ENCODE measurements at regions of chr12 and their contacts with region 1.

Region 1: DNA sequence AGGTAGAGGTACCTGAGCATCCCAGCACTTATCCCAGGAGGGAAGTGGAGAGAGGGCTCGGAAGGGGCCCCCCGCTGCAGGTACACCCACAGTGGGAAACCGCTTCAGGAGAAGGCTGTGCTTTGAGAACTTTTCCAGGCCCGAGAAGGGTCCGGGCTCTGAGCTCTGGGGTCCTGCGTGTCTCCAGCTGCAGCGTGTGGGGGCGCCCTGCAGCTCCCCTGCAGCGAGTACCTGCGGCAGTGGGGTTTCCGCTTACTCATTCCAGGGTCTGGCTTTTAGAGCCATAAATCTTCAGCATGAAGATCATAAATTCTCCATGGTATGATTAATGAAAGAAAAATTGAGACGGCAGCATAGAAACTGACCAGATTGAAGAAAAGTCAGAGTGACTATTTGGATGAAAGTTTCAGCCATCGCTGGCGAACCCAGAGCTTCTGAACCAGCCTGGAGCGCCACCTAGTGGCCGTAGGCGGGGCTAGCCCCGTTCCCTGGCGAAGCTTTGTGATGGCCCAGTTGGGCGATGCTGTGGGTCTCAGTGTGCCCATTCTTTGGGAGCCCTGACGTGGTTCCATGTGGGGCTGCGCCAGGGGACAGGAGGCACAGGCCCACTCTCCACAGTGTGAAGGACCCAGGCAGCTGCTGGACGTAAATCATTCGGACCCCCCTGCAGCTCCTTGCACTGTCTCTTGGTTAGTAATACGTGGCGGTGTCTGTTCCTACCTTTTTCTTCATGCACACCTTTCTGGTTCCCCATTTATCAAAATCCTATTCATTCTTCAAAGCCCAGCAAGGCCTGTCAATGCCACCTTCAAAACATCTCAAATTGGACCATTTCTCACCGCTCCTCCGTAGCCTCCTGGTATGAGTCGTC is 198.2 kb downstream of the TSPAN9 start:
- DNase-seq: no peak
- H3K4me3 ChIP-seq: no peak overlapping the region
- H3K27ac ChIP-seq: no peak overlapping the region
- H3K4me1 ChIP-seq: peaks cover 18% of the 10 kb centered on the region
- H3K27me3 ChIP-seq: no peaks in the 10 kb centered on the region
- CTCF ChIP-seq: peak; percentile 83 to 90 (median 87)
- POLR2A ChIP-seq: no peak

Region 2: DNA sequence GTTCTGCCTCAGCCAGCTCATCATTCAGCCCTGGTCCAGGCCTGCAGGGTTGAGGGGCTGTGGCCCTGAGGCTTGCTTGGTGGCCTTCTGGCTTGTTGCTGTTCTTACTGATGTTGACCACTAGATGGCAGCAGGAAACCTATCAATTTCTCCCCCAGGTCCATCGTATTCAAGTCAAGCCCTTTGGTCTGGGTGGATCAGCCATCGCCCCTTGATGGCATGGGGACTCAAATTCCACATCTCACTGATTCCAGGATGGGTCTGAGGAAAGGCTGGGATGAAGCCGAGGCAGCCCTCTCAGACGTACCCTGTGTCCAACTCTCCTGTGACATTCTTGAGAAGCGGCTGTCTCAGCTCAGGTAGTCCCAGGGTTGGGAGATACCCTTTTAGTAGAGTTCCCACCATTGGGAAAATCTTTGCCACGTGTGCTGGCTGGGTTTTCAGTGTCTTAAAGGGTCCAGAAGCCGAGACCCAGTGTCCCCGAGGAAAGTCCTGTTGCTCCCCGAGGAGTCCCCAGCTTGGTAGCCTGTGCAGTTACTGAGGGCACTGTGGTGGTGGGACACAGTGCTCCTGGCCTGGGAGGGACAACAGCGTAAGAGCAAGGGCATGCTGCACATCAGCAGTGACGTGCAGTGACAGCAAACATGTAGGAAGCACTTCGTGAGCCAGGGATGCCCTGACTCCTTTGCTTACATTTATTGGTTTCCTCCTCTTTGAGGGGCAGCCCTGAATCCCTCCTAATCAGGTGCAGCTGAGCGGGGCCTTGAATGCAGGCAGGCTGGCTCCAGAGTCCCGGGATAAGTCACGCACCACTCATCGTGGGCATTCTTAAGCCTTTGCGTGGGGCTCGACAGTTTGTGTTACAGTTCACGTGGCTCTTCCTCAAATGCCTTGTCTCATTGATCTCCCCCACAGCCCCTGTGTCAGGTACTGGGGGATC is 139.6 kb before region 1 on chr12:
- intact Hi-C with region 1: loop called (anchors 2 kb)
- DNase-seq: no peak
- H3K4me3 ChIP-seq: no peak overlapping the region
- H3K27ac ChIP-seq: no peak overlapping the region
- H3K4me1 ChIP-seq: peaks cover 50% of the 10 kb centered on the region
- H3K27me3 ChIP-seq: no peaks in the 10 kb centered on the region
- CTCF ChIP-seq: peak; percentile 51 to 86 (median 75)
- POLR2A ChIP-seq: no peak

Region 3: GRCh38 chr12:3202734-3203446 is 72.5 kb before region 1 on chr12:
- intact Hi-C with region 1: loop called (anchors 10 kb)
- DNase-seq: no peak
- H3K4me3 ChIP-seq: no peak overlapping the region
- H3K27ac ChIP-seq: no peak overlapping the region
- H3K4me1 ChIP-seq: peaks cover 58% of the 10 kb centered on the region
- H3K27me3 ChIP-seq: no peaks in the 10 kb centered on the region
- CTCF ChIP-seq: peak; percentile 83 to 92 (median 84)
- POLR2A ChIP-seq: no peak